Right ventricle myocardium superior (tissue), 1 donor: ENCODE measurements at regions of chr7 and their contacts with region 1.

Region 1: DNA sequence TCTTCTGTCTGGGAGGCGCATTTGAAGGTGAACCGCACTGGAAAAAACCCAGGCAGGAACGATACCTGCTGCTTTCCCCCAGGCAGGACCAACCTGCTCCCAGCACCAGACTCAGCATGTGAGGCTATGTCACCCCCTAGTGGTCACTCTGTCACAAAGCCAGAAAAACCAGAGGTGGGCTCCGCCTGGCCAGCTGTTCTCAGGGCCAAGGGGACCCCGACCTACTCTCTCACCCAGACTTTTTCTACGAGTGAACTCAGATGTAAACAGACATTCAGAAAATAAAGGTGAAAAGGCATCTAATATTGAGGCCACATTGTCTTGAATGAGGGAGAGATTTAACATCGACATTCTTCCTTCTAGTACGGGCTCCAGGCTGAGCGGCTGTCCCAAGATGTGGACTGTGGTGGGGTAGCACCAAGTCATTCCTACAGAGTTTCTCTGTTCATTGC is 117.3 kb downstream of the PRKAG2 start:
- DNase-seq: peak; percentile 49
- ATAC-seq: peak; percentile 61

Region 2: GRCh38 chr7:151051108-151051507 is 708.5 kb before region 1 on chr7:
- intact Hi-C with region 1: no loop called
- DNase-seq: peak; percentile 71
- ATAC-seq: peak; percentile 69

Region 3: GRCh38 chr7:151368136-151368571 is 391.5 kb before region 1 on chr7:
- intact Hi-C with region 1: loop called (anchors 5 kb)
- DNase-seq: peak; percentile 90
- ATAC-seq: peak; percentile 98

Region 4: DNA sequence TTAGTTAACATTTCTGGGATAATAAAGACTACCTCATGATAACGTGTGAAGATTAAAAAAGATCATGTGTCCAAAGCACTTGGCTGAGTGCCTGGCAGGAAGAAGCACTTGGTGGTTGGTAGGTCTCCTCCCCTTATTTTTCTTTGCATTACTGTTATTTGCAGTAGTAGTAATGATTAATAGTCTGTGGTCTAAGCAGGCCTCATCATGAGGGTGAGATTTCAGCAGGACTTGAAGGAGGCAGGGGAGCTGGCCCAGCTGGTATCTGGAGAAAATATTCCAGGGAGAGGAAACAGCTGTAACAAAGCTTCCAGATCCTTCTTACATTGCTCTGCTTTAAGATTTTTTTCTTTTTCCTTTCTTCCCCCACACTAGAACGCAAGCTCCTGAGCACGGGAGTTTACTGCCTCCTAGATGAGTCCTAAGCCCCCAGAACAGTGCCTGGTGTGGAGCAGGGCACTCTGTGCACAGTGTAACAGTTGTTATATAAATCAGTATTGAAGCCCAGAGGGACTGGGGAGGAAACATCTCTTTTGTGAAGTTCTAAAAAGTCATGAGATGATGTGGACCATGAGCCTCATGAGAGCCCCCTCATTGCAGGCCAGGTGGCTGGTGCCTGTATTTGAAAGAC is 208.8 kb before region 1 on chr7:
- intact Hi-C with region 1: loop called (anchors 10 kb)
- DNase-seq: no peak
- ATAC-seq: no peak

Region 5: DNA sequence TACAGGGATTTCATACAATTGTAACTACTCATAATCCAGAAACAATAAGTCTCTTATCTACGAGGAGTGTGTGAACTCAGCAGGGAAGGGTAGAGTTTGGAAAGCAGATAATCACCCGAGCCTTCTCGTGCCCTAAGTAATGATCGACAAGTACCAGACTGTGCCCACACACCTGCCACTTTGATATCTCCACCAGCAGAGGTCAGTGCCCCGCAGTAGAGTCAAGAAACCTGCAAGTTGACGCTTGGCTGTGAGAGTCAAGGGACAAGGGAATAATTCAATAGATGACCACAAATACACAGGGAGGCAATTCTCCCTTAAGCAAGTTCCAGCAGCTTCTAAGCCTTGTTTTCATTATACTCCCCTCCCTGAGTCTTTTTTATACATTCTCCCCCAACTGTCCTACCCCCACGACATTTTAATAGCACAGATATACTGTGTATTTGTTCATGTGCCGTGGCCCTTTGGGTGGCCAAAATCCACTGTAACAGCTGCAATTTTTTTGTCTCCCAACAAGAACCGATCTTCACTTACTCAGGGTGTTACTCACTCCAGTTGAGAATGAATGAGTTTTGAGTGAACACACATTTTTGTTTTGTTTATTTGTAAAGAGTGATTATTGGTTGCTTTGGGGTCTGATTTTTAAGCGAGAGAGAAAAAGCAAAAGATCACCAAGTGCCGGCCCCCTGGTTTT is 133.0 kb before region 1 on chr7:
- intact Hi-C with region 1: loop called (anchors 5 kb)
- DNase-seq: no peak
- ATAC-seq: peak; percentile 67

Region 6: DNA sequence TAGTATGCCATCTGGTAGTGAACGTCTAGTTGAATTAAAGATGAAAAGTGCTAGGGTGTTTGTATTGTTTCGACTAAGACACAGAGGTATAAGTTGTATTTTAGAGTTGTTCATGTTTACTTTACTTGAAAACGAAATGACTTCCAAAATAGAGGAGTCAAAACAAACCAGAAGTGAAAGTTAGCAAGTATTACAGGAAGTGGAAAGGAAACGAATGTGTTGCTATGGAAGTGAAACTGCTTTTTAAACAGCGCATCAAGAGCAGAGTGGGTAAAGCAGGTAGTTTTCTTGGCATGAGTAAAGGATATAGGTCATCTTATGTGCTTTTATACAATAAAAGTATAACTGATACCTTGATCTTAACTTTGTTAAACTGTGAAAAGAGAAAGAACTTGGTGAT is 176.6 kb after region 1 on chr7:
- intact Hi-C with region 1: no loop called
- DNase-seq: no peak
- ATAC-seq: no peak